Activated naive CD4-positive, alpha-beta T cell treated with anti-CD3 and anti-CD28 coated beads, Interleukin-2, amount 10 ng/mL, durations not matched to agents 7 days and 5 days (primary cell): ENCODE measurements at regions of chr12 and their contacts with region 1.

Region 1: GRCh38 chr12:11202811-11203210 is 16.1 kb upstream of the TAS2R42 start:
- DNase-seq: no peak
- H3K4me3 Mint-ChIP-seq: no peak overlapping the region
- H3K27ac Mint-ChIP-seq: no peak overlapping the region
- H3K4me1 Mint-ChIP-seq: no peaks in the 10 kb centered on the region
- H3K27me3 Mint-ChIP-seq: peaks cover 7% of the 10 kb centered on the region

Region 2: GRCh38 chr12:10759657-10760056 is 443.2 kb before region 1 on chr12:
- CTCF ChIA-PET with region 1: interaction called, 10 read pairs
- DNase-seq: no peak
- H3K4me3 Mint-ChIP-seq: no peak overlapping the region
- H3K27ac Mint-ChIP-seq: no peak overlapping the region
- H3K4me1 Mint-ChIP-seq: no peaks in the 10 kb centered on the region
- H3K27me3 Mint-ChIP-seq: peaks cover 17% of the 10 kb centered on the region

Region 3: DNA sequence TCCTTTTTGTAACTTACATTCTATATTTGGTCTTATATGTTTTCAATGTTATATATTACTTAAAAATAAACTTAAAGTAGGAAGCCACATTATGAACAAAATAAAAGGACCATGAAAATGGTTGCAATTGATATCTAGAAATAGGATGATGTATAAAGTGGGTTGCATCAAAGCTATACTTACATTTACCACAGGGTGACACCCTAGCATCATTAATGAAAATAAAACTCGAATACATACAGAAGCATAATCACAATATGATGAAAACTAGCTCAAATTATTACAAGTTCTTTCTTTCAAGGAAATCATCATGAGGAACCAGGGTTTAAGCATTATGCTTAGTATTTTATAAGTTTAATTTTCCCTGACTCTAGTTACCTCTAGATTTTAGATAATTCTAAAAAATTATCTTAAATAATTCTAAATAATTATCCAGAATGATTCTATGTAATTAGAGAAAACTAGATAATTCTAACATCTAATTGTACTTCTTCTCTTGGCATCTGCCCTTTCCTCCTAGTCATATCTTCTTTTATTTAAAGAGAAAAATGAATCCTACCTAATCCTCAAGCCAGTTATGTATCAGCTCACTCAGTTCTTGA is 431.6 kb before region 1 on chr12:
- CTCF ChIA-PET with region 1: interaction called, 28 read pairs
- DNase-seq: no peak
- H3K4me3 Mint-ChIP-seq: no peak overlapping the region
- H3K27ac Mint-ChIP-seq: no peak overlapping the region
- H3K4me1 Mint-ChIP-seq: no peaks in the 10 kb centered on the region
- H3K27me3 Mint-ChIP-seq: peaks cover 23% of the 10 kb centered on the region

Region 4: DNA sequence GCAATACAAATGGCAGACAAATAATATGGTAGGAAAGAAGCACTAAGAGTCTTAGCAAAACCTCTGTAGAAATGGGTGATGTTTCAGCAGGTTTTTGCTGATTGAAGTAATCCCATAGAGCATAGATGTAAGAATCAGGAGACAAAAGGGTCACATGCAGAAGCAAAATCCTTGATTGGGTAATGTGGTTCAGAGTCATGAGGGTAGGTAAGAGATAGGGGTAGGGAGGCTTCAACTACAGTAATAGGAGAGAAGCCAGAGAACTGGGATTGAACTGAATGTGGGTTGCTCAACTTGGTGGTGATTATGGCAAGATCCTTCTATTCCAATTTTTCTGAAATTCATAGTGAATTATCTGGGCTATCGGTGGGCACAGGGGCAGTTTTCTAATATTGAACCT is 61.7 kb after region 1 on chr12:
- CTCF ChIA-PET with region 1: no interaction called
- DNase-seq: no peak
- H3K4me3 Mint-ChIP-seq: no peak overlapping the region
- H3K27ac Mint-ChIP-seq: no peak overlapping the region
- H3K4me1 Mint-ChIP-seq: no peaks in the 10 kb centered on the region
- H3K27me3 Mint-ChIP-seq: no peaks in the 10 kb centered on the region